ENCODE measurements at regions of chr4 and their contacts with region 1.

Region 1: DNA sequence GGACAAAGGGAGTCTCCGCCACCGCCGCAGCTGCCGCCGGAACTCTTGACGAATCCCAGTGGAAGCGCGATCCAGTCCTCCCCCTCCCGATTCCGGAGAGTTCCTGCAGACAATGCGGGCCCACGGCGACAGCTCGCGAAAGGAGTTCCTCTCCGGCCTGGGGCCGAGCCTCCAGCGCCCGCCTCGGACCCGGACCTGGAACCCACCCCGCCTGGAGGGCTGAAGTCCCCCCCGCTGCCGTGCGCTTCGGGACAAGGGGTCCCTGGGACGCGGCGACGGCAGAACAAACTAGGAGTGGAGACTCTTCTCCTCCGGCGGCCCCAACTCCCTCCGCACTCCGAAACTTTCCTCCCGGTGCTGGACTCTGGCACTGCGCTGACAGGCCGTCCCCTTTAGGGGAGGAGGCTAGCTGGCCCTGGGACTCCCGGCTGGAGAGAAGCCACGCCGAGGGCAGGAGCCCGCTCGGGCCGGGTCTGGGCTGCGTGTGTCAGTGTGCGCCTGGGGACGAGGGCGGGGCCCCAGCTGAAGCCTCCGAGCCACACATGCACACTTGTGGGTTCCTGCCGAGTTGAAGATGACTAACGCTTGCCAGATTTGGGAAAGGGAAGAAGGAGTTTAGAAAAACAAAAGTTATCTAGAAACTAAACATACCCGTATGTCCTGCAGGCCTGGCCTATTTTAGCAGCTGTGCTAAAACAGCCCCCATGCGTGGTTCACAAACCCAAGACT is at the start of gene ANTXR2:
- DNase-seq: peak; percentile 67 to 79
- H3K4me3 ChIP-seq: peak within 1 kb of the TSS; percentile 70 to 99 (median 95)
- H3K27ac ChIP-seq: peak within 1 kb of the TSS; percentile 84 to 89
- H3K4me1 ChIP-seq: no peaks in the 10 kb centered on the region
- H3K27me3 ChIP-seq: no peaks in the 10 kb centered on the region
- CTCF ChIP-seq: no peak
- POLR2A ChIP-seq: no peak
- total RNA-seq, gene ANTXR2: 55.1 to 229 (median 77.4) TPM

Region 2: DNA sequence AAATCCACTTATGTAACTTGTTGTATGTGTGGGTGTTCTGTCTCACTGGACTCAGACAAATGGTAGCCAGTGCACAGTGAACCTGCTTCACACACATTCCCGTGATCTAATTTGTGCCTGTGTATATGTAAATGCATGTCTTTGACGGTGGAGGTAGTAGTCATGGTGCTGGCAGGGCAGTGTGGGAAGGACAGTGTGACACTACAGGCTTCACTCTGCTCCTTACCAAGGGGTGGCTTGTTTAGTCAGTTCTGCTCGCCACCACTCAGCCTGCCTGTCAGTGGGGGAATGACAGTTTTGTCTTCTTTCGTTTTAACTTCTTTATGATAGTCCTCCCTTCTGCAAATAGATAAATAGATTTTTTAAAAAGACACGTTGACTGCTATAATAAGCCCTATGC is 1115.9 kb before region 1 on chr4:
- intact Hi-C with region 1: loop called (anchors 5 kb)
- DNase-seq: no peak
- H3K4me3 ChIP-seq: no peak overlapping the region
- H3K27ac ChIP-seq: no peak overlapping the region
- H3K4me1 ChIP-seq: no peaks in the 10 kb centered on the region
- H3K27me3 ChIP-seq: no peaks in the 10 kb centered on the region
- CTCF ChIP-seq: no peak
- POLR2A ChIP-seq: no peak

Region 3: DNA sequence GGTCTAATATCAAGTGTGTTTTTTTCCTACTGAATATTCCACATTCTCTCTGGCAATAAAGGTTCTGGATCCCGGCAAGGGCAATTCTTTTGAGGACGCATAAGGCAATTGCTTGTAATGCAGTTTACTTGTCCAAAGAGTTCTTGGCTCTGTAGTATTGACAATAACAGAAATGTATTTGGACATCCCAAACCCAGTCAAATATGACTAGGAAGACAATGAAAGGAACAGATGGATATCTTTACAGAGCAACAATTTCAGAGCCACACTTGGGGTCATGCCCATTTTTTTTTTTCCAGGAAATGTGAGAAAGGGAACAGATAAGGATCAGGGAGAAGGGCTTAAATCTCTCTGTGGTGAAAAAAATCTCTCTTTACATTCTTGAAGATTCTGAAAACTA is 677.1 kb before region 1 on chr4:
- intact Hi-C with region 1: no loop called
- DNase-seq: no peak
- H3K4me3 ChIP-seq: no peak overlapping the region
- H3K27ac ChIP-seq: no peak overlapping the region
- H3K4me1 ChIP-seq: no peaks in the 10 kb centered on the region
- H3K27me3 ChIP-seq: no peaks in the 10 kb centered on the region
- CTCF ChIP-seq: no peak
- POLR2A ChIP-seq: no peak

Region 4: GRCh38 chr4:79609817-79610216 is 463.1 kb before region 1 on chr4:
- intact Hi-C with region 1: loop called (anchors 10 kb)
- DNase-seq: no peak
- H3K4me3 ChIP-seq: no peak overlapping the region
- H3K27ac ChIP-seq: no peak overlapping the region
- H3K4me1 ChIP-seq: no peaks in the 10 kb centered on the region
- H3K27me3 ChIP-seq: no peaks in the 10 kb centered on the region
- CTCF ChIP-seq: no peak
- POLR2A ChIP-seq: no peak

Region 5: DNA sequence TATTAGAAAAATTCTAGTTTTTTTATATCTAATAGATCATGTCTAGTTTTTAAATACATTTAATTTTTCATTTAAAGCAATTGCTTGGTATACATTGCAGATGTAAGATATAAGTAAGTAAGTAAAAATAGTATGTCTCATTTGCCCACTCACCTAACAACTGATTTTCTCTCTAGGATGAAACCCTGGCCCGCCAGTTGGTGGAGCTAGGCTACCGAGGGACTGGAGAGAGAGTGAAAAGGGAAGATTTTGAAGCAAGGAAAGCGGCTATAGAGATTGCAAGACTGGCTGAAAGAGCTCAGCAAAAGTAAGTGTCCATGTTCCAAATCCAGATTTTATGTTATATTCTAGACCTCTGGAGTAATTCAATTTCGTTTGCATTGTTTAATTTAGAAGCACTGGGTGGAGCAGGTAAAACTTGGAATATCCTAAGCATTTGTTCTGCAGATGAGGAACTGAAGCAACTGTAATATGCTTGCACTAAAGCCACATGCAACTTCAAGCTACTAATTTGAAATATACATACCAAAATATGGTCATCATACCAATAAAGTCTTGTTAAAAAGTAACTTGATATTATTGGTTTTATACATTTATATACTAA is 289.8 kb after region 1 on chr4:
- intact Hi-C with region 1: no loop called
- DNase-seq: no peak
- H3K4me3 ChIP-seq: no peak overlapping the region
- H3K27ac ChIP-seq: no peak overlapping the region
- H3K4me1 ChIP-seq: no peaks in the 10 kb centered on the region
- H3K27me3 ChIP-seq: peaks cover 0 to 6% of the 10 kb centered on the region in 2 donors
- CTCF ChIP-seq: no peak
- POLR2A ChIP-seq: no peak

Region 6: GRCh38 chr4:80655662-80656061 is 582.8 kb after region 1 on chr4:
- intact Hi-C with region 1: no loop called
- DNase-seq: no peak
- H3K4me3 ChIP-seq: no peak overlapping the region
- H3K27ac ChIP-seq: no peak overlapping the region
- H3K4me1 ChIP-seq: no peaks in the 10 kb centered on the region
- H3K27me3 ChIP-seq: no peaks in the 10 kb centered on the region
- CTCF ChIP-seq: no peak
- POLR2A ChIP-seq: no peak